BJ (cell line): ENCODE measurements at regions of chr2 and their contacts with region 1.

Region 1: GRCh38 chr2:231713730-231714430 is 5.6 kb downstream of the PTMA start:
- DNase-seq: no peak
- H3K4me3 ChIP-seq: no peak overlapping the region
- H3K27me3 ChIP-seq: no peaks in the 10 kb centered on the region
- CTCF ChIP-seq: peak; percentile 94

Region 2: GRCh38 chr2:231604685-231605606 is 108.9 kb before region 1 on chr2:
- CTCF ChIA-PET with region 1: interaction called, 139 read pairs
- POLR2A ChIA-PET with region 1: no interaction called
- DNase-seq: peak; percentile 88
- H3K4me3 ChIP-seq: peak overlapping the region; percentile 54
- H3K27me3 ChIP-seq: no peaks in the 10 kb centered on the region
- CTCF ChIP-seq: no peak

Region 3: DNA sequence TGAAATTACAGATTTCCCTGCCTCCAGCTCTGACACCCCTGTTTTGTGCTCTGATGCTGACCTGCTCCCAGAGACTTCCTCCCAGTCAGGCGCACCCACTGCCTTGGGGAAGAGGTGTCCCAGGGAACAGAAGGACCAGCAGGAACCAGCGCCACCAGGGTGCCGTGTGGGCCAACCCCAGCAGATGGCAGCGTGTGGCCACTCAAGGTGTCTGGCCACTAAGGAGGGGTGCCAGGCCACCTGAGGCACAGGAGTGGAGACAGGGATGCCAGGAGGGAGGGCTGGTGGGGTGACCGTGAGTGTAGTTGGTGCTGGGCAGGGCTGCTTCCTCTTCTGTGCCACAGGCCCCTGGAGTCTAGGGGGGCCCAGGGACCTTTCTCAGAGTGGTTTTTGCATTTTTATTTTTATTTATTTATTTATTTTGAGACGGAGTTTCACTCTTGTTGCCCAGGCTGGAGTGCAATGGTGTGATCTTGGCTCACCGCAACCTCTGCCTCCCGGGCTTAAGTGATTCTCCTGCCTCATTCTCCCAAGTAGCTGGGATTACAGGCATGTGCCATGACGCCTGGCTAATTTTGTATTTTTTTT is 65.2 kb before region 1 on chr2:
- CTCF ChIA-PET with region 1: interaction called, 31 read pairs
- POLR2A ChIA-PET with region 1: no interaction called
- DNase-seq: no peak
- H3K4me3 ChIP-seq: no peak overlapping the region
- H3K27me3 ChIP-seq: no peaks in the 10 kb centered on the region
- CTCF ChIP-seq: peak; percentile 72

Region 4: DNA sequence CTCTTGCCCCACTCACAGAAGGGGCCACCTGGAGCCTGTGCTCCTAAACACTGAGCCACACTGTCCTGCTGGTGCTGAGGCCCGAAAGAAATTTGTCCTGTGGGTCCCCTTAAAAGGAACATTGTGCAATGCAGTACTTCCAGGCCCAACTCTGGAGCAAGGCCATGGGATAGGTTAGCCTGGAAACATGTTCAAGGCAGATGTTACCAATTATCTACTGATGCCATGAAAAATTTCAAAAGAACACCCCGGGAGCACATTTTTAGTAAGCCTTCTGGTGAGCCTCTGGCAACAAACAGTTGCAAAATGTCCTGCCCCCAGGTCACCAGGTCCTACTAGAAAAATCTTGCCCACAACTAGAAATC is 17.9 kb before region 1 on chr2:
- CTCF ChIA-PET with region 1: interaction called, 719 read pairs
- POLR2A ChIA-PET with region 1: interaction called, 6 read pairs
- DNase-seq: peak; percentile 87
- H3K4me3 ChIP-seq: no peak overlapping the region
- H3K27me3 ChIP-seq: no peaks in the 10 kb centered on the region
- CTCF ChIP-seq: no peak

Region 5: DNA sequence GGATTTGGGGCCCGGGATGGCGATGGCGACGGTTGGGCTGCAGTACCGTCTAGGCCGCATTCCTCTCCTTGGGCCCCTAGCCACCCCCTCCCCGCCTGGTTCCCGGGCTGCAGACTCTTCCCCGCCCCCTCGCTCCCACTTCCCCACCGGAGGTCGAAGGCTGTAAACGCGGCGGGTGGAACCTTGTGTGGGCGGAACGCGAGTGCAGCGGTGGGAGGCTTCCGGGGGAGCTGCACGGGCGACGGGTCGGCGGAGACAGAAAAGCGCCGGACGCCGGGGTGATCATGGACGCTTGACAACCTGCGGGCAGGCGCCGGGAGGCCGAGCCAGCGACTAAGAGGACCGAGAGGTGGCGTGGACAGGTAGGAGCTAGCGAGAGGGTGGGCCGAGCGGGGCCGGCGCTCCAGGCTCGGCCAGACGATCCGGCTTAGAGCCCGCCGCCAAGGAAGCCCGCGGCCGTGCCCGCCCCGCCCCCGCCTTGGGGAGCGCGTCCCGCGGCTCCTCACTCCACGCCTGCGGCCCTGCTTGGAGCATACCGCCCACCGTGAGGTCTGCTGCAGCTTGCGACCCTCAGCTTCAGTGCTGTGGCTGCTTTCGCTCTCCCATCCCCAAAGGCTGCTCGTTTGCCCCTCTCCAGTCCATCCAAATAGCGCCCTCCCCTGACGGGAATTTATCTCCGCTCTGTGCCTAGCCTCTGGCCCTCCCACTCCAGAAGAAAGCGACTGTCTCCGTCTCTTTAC is 72.5 kb after region 1 on chr2 and contains the start of gene COPS7B:
- CTCF ChIA-PET with region 1: interaction called, 10 read pairs
- POLR2A ChIA-PET with region 1: no interaction called
- DNase-seq: no peak
- H3K4me3 ChIP-seq: peak within 1 kb of the TSS; percentile 92
- H3K27me3 ChIP-seq: no peaks in the 10 kb centered on the region
- CTCF ChIP-seq: peak; percentile 64
- polyA plus RNA-seq, gene COPS7B: 40.8 and 52.7 TPM in 2 replicates